ENCODE measurements at regions of chr3 and their contacts with region 1.

Region 1: DNA sequence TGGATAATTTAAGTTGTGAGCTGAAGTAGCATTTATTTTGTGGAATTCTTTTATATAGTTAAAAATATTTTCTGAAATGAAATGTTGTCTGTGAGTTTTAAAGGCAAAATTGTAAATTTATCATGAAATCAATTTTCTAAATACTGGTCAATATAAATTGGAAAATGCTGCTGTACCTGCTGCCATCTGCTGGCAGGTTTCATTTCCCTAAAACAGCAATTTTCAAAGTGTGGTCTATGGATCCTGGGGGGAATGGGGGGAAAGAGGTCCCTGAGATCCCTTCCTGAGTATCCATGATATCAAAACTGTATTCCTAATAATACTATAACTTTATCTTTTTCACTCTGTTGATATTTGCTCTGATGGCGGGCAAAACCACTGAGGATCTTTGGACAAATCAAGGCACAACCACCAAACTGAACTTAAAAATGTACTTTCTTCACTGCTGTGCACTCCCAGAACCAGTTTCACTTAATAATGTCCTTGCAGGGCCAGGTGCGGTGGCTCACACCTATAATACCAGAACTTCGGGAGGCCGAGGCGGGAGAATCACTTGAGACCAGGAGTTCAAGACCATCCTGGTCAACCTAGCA is 17.2 kb upstream of the CCR4 start:
- DNase-seq: peak in 1 of 2 donors; percentile 55
- ATAC-seq: no peak
- H3K4me3 ChIP-seq: no peak overlapping the region
- H3K4me3 Mint-ChIP-seq: no peak overlapping the region
- H3K27ac ChIP-seq: no peak overlapping the region
- H3K27ac Mint-ChIP-seq: no peak overlapping the region
- H3K4me1 ChIP-seq: no peaks in the 10 kb centered on the region
- H3K4me1 Mint-ChIP-seq: no peaks in the 10 kb centered on the region
- H3K27me3 ChIP-seq: no peaks in the 10 kb centered on the region
- H3K27me3 Mint-ChIP-seq: no peaks in the 10 kb centered on the region
- CTCF ChIP-seq: peak; percentile 39

Region 2: DNA sequence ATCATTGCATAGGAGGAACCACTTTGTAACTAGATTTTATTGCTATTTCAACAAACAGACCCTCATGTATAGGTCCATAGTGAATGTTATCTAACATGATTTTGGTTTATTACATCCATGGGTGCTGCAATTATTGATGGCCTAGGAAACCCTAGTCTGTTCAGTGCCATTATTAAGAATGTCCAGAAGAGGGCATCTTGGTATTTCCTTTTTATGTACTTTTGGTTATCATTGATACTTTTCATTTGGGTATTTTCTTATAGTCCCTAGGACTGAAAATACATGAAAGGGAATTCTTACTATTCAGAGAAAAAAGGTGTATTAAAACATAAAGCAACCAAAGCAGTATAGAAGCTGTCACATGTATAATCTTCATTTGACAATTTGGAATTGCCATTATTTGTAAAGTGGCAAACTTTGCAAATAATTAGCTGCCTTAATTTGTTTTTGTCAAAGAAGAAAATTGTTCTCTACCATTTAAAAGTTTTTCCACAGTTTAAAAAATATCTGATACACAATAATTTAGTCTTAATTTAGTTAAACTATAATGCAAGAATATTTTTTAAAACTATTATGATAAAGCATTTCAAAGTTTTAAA is 200.5 kb before region 1 on chr3:
- intact Hi-C with region 1: loop called (anchors 2 kb)
- DNase-seq: peak in 1 of 2 donors; percentile 44
- ATAC-seq: peak in 2 of 3 donors; percentile 44 to 52
- H3K4me3 ChIP-seq: no peak overlapping the region
- H3K4me3 Mint-ChIP-seq: no peak overlapping the region
- H3K27ac ChIP-seq: no peak overlapping the region
- H3K27ac Mint-ChIP-seq: no peak overlapping the region
- H3K4me1 ChIP-seq: no peaks in the 10 kb centered on the region
- H3K4me1 Mint-ChIP-seq: no peaks in the 10 kb centered on the region
- H3K27me3 ChIP-seq: no peaks in the 10 kb centered on the region
- H3K27me3 Mint-ChIP-seq: no peaks in the 10 kb centered on the region
- CTCF ChIP-seq: peak; percentile 57